ENCODE measurements at regions of chr5 and their contacts with region 1.

Region 1: DNA sequence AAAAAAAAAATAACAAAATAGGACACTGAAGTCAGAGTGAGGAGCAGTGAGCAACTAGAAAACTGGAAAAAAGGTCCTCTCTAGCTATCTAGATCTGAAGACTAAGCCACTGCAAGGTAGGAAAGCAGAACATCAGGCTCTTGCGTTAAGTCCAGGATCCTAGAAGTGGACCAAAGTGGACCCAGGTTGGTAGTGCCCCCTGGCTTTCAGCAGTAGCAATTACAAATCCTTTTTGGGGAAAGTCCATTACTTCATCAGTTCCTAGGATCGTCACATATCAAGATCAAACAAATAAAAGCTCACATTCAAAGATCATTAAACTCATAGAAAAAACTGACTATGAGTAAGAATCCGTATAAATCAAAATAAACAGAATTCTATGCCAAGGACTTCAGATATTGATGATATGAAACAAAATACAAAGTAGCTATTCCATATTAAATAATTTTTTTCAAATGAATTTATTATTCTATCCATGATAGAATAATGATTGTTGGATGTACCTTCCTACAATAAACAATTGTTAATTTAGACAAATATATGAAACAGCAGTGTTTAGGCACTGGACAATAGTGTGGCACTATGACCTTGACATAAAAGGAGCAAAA is 6.5 kb upstream of the RICTOR start:
- DNase-seq: peak; percentile 46
- CTCF ChIP-seq: peak; percentile 63

Region 2: DNA sequence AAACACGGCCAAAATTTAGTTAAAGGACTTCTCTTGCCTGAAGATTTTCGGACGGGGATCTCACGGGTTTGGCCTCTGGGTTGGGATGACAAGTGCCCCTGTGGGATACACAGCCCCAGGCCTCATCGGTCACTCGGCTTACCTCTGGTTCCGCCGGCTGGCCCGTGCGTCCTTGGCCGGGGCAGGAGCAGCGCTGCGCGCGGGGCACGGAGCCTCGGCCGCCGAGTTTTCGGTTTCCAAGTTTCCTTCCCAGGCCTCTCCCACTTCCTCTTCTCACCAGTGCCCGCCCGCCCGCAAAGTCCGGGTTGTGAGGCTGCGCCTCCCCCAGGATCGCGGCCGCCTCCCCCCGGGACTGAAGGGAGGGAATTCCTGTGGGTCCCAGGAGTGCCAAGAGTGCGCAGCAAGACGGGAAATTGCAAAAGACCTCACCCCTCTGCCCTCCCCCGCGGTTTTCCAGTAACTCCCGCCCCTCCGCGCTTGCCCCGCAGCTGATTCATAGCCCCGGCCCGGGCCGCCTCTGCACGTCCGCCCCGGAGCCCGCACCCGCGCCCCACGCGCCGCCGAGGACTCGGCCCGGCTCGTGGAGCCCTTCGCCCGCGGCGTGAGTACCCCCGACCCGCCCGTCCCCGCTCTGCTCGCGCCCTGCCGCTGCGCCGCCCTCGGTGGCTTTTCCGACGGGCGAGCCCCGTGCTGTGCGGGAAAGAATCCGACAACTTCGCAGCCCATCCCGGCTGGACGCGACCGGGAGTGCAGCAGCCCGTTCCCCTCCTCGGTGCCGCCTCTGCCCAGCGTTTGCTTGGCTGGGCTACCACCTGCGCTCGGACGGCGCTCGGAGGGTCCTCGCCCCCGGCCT is 234.9 kb before region 1 on chr5 and contains the start of gene OSMR:
- in situ Hi-C with region 1: loop called (anchors 25 kb)
- DNase-seq: peak; percentile 41
- CTCF ChIP-seq: no peak

Measured in GM13976 (cell line).